ENCODE measurements at regions of chr14 and their contacts with region 1.

Region 1: DNA sequence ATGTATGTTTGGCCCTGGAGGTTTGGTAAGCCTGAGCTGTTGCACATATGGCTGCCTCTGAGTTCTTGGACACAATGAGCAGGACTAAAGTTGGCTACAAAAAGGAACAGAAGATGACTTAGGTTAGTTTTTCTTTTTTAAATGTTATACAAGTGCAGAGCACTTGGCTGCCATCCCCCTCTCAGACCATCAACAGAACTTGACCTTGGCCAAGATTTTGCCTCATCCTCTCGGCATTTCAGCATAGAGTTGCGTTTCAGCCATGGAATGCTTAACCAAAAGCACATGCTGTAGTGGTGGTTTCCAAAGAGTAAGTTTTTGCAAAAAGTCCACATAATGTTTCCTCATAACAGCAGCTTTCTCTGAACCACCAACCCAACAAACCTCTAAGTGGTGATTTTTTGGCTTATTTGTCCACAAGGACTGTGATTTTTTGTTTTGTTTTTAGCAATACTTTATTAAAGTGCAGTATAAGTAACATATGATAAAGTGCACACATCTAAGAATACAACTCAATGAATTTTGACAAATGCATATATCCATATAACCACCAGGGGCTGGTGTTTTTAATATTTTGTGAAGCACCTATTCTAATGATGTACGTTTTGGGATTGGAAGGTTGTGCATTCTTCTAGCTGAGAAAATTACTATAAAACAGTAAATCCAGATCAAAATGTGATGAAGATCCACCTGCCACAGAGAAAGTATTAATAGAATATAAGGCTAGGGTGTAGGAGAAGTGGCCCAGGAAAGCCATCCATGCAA is 12.1 kb upstream of the GALNT16 start:
- DNase-seq: no peak
- ATAC-seq: no peak
- H3K4me3 ChIP-seq: no peak overlapping the region
- H3K27ac ChIP-seq: no peak overlapping the region
- H3K4me1 ChIP-seq: no peaks in the 10 kb centered on the region
- H3K27me3 ChIP-seq: no peaks in the 10 kb centered on the region
- CTCF ChIP-seq: peak in 2 of 3 experiments; percentile 16 to 17; a peak in 2 of 6 replicates
- EP300 ChIP-seq: no peak
- POLR2A ChIP-seq: no peak
- RAD21 ChIP-seq: peak; percentile 28; the same call in 1 of the 2 replicates

Region 2: DNA sequence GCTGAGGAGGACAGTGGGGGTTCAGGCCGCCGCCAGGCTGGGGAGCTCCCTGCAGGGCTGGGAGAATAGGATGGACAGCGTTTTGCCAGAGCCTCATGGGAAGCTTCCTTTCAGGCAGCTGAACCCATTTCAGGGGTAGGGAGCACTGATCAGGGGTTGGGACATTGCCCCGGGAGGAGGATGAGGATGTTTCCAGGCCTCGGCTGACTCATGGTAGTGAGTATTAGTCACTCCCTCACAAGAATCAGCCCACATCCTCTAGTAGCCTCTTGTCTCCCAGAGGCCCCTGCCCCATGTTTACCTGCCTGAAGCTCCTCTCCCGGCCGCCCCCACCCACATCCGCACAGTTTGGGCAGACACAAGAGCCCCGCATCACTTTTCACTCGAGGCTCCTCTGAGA is 544.8 kb before region 1 on chr14:
- CTCF ChIA-PET with region 1: no interaction called
- POLR2A ChIA-PET with region 1: no interaction called
- RAD21 ChIA-PET with region 1: no interaction called
- SMC1A ChIA-PET with region 1: no interaction called
- in situ Hi-C with region 1: no loop called
- intact Hi-C with region 1: no loop called
- DNase-seq: no peak
- ATAC-seq: no peak
- H3K4me3 ChIP-seq: no peak overlapping the region
- H3K27ac ChIP-seq: no peak overlapping the region
- H3K4me1 ChIP-seq: no peaks in the 10 kb centered on the region
- H3K27me3 ChIP-seq: no peaks in the 10 kb centered on the region
- CTCF ChIP-seq: no peak
- EP300 ChIP-seq: no peak
- POLR2A ChIP-seq: no peak
- RAD21 ChIP-seq: no peak

Region 3: DNA sequence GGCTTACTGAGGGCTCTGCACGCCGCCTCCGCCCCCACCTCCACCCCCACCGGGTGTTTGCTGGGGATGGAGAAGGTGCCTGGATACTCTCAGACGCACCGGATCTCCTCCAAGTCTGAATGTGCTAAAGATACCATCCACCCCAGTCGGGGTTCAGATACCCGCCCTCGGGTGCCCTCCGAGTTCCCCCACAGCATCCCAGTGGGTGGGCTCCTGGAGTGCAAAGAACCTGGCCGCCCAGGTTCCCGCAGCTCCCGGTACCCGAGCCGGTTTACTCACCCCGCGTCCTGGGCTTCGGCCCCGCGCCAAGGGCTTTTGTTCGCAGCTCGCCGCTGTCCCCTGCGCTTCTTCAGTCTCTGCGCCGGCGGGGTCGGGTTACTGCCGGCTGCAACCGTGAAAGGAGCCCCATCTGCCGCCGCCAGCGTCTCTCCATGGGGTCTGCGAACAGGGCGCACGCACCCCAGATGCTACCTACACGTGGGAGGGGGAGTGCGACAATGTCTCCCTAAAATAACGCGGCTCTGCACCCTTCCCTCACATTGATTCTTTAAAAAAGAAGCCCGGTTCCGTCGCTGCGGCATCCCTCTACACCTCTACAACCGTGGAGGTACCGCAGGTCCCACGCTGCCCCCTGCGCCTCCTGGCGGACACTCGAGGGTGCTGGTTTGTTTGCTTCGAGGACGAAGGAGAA is 326.6 kb after region 1 on chr14 and contains the start of gene CCDC177:
- CTCF ChIA-PET with region 1: interaction called, 20 read pairs
- POLR2A ChIA-PET with region 1: no interaction called
- RAD21 ChIA-PET with region 1: interaction called, 5 read pairs
- SMC1A ChIA-PET with region 1: interaction called, 6 read pairs
- in situ Hi-C with region 1: loop called (anchors 5 kb)
- intact Hi-C with region 1: loop called (anchors 2 kb)
- DNase-seq: no peak
- ATAC-seq: peak; percentile 93
- H3K4me3 ChIP-seq: no peak within 1 kb of the TSS
- H3K27ac ChIP-seq: no peak within 1 kb of the TSS
- H3K4me1 ChIP-seq: no peaks in the 10 kb centered on the region
- H3K27me3 ChIP-seq: peaks cover 13 to 16% of the 10 kb centered on the region in 2 experiments
- CTCF ChIP-seq: peak; percentile 77 to 88 (median 87)
- EP300 ChIP-seq: no peak
- POLR2A ChIP-seq: no peak
- RAD21 ChIP-seq: peak; percentile 70
- polyA plus RNA-seq, gene CCDC177: not detected

Measured in GM12878 (cell line).